Activated CD8-positive, alpha-beta T cell treated with anti-CD3 and anti-CD28 coated beads for 36 hours (primary cell): ENCODE measurements at regions of chr9 and their contacts with region 1.

Region 1: DNA sequence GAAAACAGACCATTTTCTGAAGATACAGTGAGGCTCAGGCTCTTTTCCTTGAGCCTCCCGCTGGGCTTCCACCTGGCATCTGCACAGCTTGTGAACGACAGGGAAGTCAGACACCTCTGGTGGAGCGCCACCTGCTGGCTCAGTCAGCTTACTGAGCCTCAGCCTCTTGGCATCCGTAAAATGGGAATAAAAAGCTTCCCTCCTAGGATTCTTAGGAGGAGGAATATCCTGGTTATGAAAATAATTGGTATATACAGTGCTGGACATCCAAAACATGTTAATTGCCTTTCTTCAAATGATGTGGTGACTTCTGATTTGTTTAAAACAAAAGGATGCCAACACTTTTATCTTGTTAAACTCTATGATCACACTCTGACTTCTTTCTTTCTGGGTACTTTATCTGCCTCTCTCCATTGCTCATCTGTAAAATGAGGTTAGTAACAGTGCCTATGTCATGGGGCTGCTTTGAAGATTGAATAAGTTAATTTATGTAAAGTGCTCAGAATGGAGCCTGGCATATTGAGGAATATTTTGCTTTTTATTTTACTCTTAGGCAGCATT is 67.5 kb downstream of the MAMDC2 start:
- DNase-seq: peak; percentile 72
- ATAC-seq: no peak
- H3K4me3 Mint-ChIP-seq: no peak overlapping the region
- H3K27ac Mint-ChIP-seq: no peak overlapping the region
- H3K4me1 Mint-ChIP-seq: peaks cover 8% of the 10 kb centered on the region
- H3K27me3 Mint-ChIP-seq: peaks cover 12% of the 10 kb centered on the region
- CTCF ChIP-seq: peak; percentile 96

Region 2: GRCh38 chr9:69513141-69513820 is 597.8 kb before region 1 on chr9:
- CTCF ChIA-PET with region 1: no interaction called
- POLR2A ChIA-PET with region 1: no interaction called
- intact Hi-C with region 1: no loop called
- DNase-seq: no peak
- ATAC-seq: no peak
- H3K4me3 Mint-ChIP-seq: no peak overlapping the region
- H3K27ac Mint-ChIP-seq: no peak overlapping the region
- H3K4me1 Mint-ChIP-seq: no peaks in the 10 kb centered on the region
- H3K27me3 Mint-ChIP-seq: no peaks in the 10 kb centered on the region
- CTCF ChIP-seq: no peak

Region 3: GRCh38 chr9:69963803-69964202 is 147.3 kb before region 1 on chr9:
- CTCF ChIA-PET with region 1: interaction called, 13 read pairs
- POLR2A ChIA-PET with region 1: no interaction called
- intact Hi-C with region 1: no loop called
- DNase-seq: no peak
- ATAC-seq: no peak
- H3K4me3 Mint-ChIP-seq: no peak overlapping the region
- H3K27ac Mint-ChIP-seq: no peak overlapping the region
- H3K4me1 Mint-ChIP-seq: no peaks in the 10 kb centered on the region
- H3K27me3 Mint-ChIP-seq: peaks cover 11% of the 10 kb centered on the region
- CTCF ChIP-seq: no peak

Region 4: GRCh38 chr9:69971643-69972449 is 139.3 kb before region 1 on chr9:
- CTCF ChIA-PET with region 1: interaction called, 106 read pairs
- POLR2A ChIA-PET with region 1: no interaction called
- intact Hi-C with region 1: loop called (anchors 2 kb)
- DNase-seq: peak; percentile 74
- ATAC-seq: peak; percentile 37
- H3K4me3 Mint-ChIP-seq: no peak overlapping the region
- H3K27ac Mint-ChIP-seq: no peak overlapping the region
- H3K4me1 Mint-ChIP-seq: no peaks in the 10 kb centered on the region
- H3K27me3 Mint-ChIP-seq: peaks cover 4% of the 10 kb centered on the region
- CTCF ChIP-seq: peak; percentile 68

Region 5: DNA sequence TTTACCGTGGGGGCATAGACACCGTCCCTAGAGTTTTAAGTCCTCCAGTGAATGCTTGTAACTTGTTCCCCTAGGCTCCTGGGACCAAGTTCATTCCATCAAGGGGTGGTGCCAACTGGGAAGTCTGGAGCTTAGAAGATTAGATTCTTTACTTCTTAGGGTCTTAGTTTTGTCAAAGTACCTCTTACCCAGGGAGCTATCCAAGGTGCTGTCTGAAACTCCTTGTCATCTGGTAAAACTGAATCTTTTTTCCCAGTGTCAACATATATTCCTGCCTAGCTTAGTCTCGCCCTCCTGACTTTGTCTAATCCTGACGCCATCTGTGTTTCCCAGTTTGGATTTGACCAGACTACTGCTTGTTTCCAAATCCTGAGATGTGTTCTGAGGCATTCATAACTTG is 25.9 kb before region 1 on chr9:
- CTCF ChIA-PET with region 1: interaction called, 30 read pairs
- POLR2A ChIA-PET with region 1: no interaction called
- intact Hi-C with region 1: no loop called
- DNase-seq: no peak
- ATAC-seq: no peak
- H3K4me3 Mint-ChIP-seq: no peak overlapping the region
- H3K27ac Mint-ChIP-seq: no peak overlapping the region
- H3K4me1 Mint-ChIP-seq: no peaks in the 10 kb centered on the region
- H3K27me3 Mint-ChIP-seq: peaks cover 12% of the 10 kb centered on the region
- CTCF ChIP-seq: no peak

Region 6: GRCh38 chr9:70093944-70094343 is 17.2 kb before region 1 on chr9:
- CTCF ChIA-PET with region 1: interaction called, 30 read pairs
- POLR2A ChIA-PET with region 1: no interaction called
- intact Hi-C with region 1: no loop called
- DNase-seq: no peak
- ATAC-seq: no peak
- H3K4me3 Mint-ChIP-seq: no peak overlapping the region
- H3K27ac Mint-ChIP-seq: no peak overlapping the region
- H3K4me1 Mint-ChIP-seq: no peaks in the 10 kb centered on the region
- H3K27me3 Mint-ChIP-seq: peaks cover 11% of the 10 kb centered on the region
- CTCF ChIP-seq: no peak

Region 7: GRCh38 chr9:70100362-70100761 is 10.8 kb before region 1 on chr9:
- CTCF ChIA-PET with region 1: interaction called, 25 read pairs
- POLR2A ChIA-PET with region 1: no interaction called
- intact Hi-C with region 1: no loop called
- DNase-seq: no peak
- ATAC-seq: no peak
- H3K4me3 Mint-ChIP-seq: no peak overlapping the region
- H3K27ac Mint-ChIP-seq: no peak overlapping the region
- H3K4me1 Mint-ChIP-seq: no peaks in the 10 kb centered on the region
- H3K27me3 Mint-ChIP-seq: peaks cover 8% of the 10 kb centered on the region
- CTCF ChIP-seq: no peak